ENCODE measurements at regions of chr5 and their contacts with region 1.

Region 1: GRCh38 chr5:151002250-151002649 is 18.1 kb upstream of the GPX3 start:
- DNase-seq: peak; percentile 77
- H3K4me3 Mint-ChIP-seq: no peak overlapping the region
- H3K27ac Mint-ChIP-seq: no peak overlapping the region
- H3K4me1 Mint-ChIP-seq: no peaks in the 10 kb centered on the region
- H3K27me3 Mint-ChIP-seq: no peaks in the 10 kb centered on the region
- CTCF ChIP-seq: peak; percentile 79

Region 2: GRCh38 chr5:150791536-150791935 is 210.7 kb before region 1 on chr5:
- CTCF ChIA-PET with region 1: no interaction called
- POLR2A ChIA-PET with region 1: no interaction called
- intact Hi-C with region 1: no loop called
- DNase-seq: no peak
- H3K4me3 Mint-ChIP-seq: peak overlapping the region; percentile 65
- H3K27ac Mint-ChIP-seq: peak overlapping the region; percentile 95
- H3K4me1 Mint-ChIP-seq: peaks cover 42% of the 10 kb centered on the region
- H3K27me3 Mint-ChIP-seq: no peaks in the 10 kb centered on the region
- CTCF ChIP-seq: no peak

Region 3: GRCh38 chr5:151020304-151021110 is 18.3 kb after region 1 on chr5 and contains the start of gene GPX3:
- CTCF ChIA-PET with region 1: interaction called, 89 read pairs
- POLR2A ChIA-PET with region 1: interaction called, 3 read pairs
- intact Hi-C with region 1: no loop called
- DNase-seq: no peak
- H3K4me3 Mint-ChIP-seq: no peak within 1 kb of the TSS
- H3K27ac Mint-ChIP-seq: peak within 1 kb of the TSS; percentile 28
- H3K4me1 Mint-ChIP-seq: peaks cover 39% of the 10 kb centered on the region
- H3K27me3 Mint-ChIP-seq: no peaks in the 10 kb centered on the region
- CTCF ChIP-seq: no peak
- total RNA-seq, gene GPX3: not detected in 2 replicates

Region 4: GRCh38 chr5:151037561-151038411 is 35.5 kb after region 1 on chr5:
- CTCF ChIA-PET with region 1: interaction called, 29 read pairs
- POLR2A ChIA-PET with region 1: interaction called, 3 read pairs
- intact Hi-C with region 1: no loop called
- DNase-seq: no peak
- H3K4me3 Mint-ChIP-seq: no peak overlapping the region
- H3K27ac Mint-ChIP-seq: peak overlapping the region; percentile 75
- H3K4me1 Mint-ChIP-seq: peaks cover 7% of the 10 kb centered on the region
- H3K27me3 Mint-ChIP-seq: no peaks in the 10 kb centered on the region
- CTCF ChIP-seq: no peak

Region 5: GRCh38 chr5:151093476-151093889 is 91.2 kb after region 1 on chr5:
- CTCF ChIA-PET with region 1: interaction called, 14 read pairs
- POLR2A ChIA-PET with region 1: no interaction called
- intact Hi-C with region 1: no loop called
- DNase-seq: peak; percentile 98
- H3K4me3 Mint-ChIP-seq: peak overlapping the region; percentile 28
- H3K27ac Mint-ChIP-seq: peak overlapping the region; percentile 76
- H3K4me1 Mint-ChIP-seq: peaks cover 43% of the 10 kb centered on the region
- H3K27me3 Mint-ChIP-seq: no peaks in the 10 kb centered on the region
- CTCF ChIP-seq: no peak

Region 6: DNA sequence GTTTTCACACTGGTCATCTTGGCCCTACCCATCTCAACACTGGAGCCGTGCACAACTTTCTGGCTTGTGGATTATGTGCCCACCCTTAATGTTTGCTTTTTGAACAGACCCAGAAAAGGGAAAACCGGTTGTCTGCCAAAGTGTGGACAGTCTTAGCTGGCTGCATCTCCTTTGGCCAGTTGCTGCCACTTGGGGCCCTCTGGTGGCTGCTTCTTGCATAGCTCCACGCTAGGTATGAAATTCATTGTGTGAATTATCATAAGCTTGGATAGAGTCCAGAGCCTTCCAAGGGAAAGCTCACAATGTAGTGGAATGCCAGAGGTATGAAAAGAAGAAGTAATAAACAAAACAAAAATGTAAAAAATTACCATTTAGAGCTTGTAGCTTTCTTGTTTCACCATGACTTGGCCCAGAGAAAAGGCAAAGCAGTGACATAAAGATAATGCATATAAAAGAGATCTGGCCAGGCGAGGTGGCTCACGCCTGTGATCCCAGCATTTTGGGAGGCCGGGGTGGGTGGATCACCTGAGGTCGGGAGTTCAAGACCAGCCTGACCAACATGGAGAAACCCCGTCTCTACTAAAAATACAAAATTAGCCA is 313.8 kb after region 1 on chr5:
- CTCF ChIA-PET with region 1: interaction called, 8 read pairs
- POLR2A ChIA-PET with region 1: no interaction called
- intact Hi-C with region 1: loop called (anchors 1 kb)
- DNase-seq: peak; percentile 88
- H3K4me3 Mint-ChIP-seq: no peak overlapping the region
- H3K27ac Mint-ChIP-seq: no peak overlapping the region
- H3K4me1 Mint-ChIP-seq: no peaks in the 10 kb centered on the region
- H3K27me3 Mint-ChIP-seq: peaks cover 13% of the 10 kb centered on the region
- CTCF ChIP-seq: peak; percentile 97

Region 7: DNA sequence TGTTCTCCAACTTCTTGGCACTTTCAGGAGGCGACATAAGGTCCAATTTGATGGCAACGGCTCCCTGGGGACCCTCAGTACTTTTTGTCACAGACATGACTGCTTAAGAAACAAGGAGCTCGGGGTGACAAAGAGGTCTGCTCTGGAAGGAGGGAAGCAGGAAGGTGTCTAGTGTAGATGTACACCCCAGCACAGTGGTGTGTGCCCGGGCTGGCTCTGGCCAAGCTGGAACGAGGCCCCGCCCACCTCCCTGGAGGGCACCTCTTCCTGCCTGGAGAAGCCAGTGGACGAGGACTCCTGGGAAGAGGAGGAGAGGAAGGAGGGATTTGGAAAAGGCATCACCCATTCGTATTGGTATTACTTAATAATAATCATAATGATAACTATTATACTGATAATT is 345.1 kb after region 1 on chr5 and contains the start of gene SLC36A2:
- CTCF ChIA-PET with region 1: no interaction called
- POLR2A ChIA-PET with region 1: no interaction called
- intact Hi-C with region 1: no loop called
- DNase-seq: no peak
- H3K4me3 Mint-ChIP-seq: no peak within 1 kb of the TSS
- H3K27ac Mint-ChIP-seq: no peak within 1 kb of the TSS
- H3K4me1 Mint-ChIP-seq: peaks cover 9% of the 10 kb centered on the region
- H3K27me3 Mint-ChIP-seq: peaks cover 16% of the 10 kb centered on the region
- CTCF ChIP-seq: no peak
- total RNA-seq, gene SLC36A2: not detected in 2 replicates